ENCODE measurements at regions of chr6 and their contacts with region 1.

Region 1: DNA sequence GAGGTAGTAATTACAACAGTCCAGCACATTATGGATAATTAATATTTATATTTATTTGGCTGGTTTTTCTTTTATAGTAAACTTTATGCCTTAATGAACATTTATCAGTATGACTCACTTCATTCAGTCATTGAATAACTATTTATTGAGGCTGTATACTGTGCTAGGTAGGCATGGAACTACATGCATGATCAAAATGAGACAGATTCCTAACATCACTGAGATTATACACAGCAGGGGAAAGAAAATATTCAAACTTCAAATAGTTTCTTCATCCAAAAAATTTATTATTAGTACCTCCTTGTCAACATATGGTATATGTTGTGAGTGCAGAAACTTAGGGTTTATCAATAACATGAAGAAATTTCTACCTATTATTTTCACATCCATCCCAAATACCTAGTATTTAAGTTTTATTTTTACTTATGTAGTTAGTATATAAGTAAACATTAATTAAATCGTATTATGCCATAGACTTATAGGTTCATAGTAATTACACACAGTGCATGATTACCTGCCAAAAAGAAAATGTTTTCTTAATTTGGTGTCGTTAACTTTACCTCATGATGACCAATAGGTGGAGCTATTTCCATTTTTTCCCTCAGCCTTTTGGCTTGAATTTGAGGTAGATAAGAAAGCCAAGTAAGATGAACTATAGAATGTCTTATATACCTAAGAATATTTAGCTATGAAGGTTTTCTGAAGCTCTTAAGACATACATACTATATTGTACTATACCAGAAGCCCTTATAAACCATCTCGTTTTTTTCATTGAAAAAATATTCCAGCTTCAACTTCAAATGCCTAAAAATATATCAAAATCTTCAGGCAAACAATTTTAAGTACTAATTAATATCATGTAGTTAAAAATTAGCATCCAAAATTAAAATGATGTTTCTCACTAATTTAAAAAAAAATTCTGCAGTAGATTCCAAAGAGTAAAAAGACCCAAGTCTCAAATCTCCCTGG is 12.5 kb upstream of the TMEM30A start:
- DNase-seq: no peak
- H3K4me3 ChIP-seq: no peak overlapping the region
- H3K27ac ChIP-seq: no peak overlapping the region
- H3K4me1 ChIP-seq: peaks cover 0 to 19% (median 6%) of the 10 kb centered on the region in 6 donors
- H3K27me3 ChIP-seq: no peaks in the 10 kb centered on the region
- CTCF ChIP-seq: peak; percentile 41 to 75 (median 65)
- POLR2A ChIP-seq: no peak

Region 2: DNA sequence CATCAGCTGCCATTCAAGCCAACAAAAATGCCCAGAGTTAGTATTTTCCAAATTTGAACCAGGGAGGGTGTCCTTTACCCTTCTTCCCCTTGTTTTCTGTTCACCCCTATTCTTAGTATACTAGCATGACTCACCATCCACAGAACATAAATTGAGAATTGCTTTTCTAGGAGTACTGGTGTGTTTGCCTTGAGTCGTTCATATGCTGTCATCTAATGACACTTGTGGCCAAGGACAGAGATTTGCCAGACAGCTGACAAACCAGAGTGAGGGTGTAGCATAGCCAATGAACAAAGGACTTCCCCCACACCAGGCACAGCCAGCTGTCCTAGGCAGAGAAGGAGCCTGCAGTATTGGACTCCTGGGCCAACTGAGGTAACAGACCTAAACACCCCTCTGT is 134.3 kb after region 1 on chr6:
- intact Hi-C with region 1: no loop called
- DNase-seq: no peak
- H3K4me3 ChIP-seq: no peak overlapping the region
- H3K27ac ChIP-seq: peak overlapping the region in 3 of 8 donors; percentile 22 to 45 (median 24)
- H3K4me1 ChIP-seq: peaks cover 0 to 3% (median 0%) of the 10 kb centered on the region in 6 donors
- H3K27me3 ChIP-seq: no peaks in the 10 kb centered on the region
- CTCF ChIP-seq: no peak
- POLR2A ChIP-seq: no peak

Region 3: GRCh38 chr6:75526502-75527127 is 229.5 kb after region 1 on chr6:
- intact Hi-C with region 1: loop called (anchors 10 kb)
- DNase-seq: no peak
- H3K4me3 ChIP-seq: no peak overlapping the region
- H3K27ac ChIP-seq: no peak overlapping the region
- H3K4me1 ChIP-seq: no peaks in the 10 kb centered on the region
- H3K27me3 ChIP-seq: peaks cover 0 to 18% (median 0%) of the 10 kb centered on the region in 7 donors
- CTCF ChIP-seq: peak; percentile 17 to 71 (median 58)
- POLR2A ChIP-seq: no peak